Natural killer cell (primary cell): ENCODE measurements at regions of chr20 and their contacts with region 1.

Region 1: DNA sequence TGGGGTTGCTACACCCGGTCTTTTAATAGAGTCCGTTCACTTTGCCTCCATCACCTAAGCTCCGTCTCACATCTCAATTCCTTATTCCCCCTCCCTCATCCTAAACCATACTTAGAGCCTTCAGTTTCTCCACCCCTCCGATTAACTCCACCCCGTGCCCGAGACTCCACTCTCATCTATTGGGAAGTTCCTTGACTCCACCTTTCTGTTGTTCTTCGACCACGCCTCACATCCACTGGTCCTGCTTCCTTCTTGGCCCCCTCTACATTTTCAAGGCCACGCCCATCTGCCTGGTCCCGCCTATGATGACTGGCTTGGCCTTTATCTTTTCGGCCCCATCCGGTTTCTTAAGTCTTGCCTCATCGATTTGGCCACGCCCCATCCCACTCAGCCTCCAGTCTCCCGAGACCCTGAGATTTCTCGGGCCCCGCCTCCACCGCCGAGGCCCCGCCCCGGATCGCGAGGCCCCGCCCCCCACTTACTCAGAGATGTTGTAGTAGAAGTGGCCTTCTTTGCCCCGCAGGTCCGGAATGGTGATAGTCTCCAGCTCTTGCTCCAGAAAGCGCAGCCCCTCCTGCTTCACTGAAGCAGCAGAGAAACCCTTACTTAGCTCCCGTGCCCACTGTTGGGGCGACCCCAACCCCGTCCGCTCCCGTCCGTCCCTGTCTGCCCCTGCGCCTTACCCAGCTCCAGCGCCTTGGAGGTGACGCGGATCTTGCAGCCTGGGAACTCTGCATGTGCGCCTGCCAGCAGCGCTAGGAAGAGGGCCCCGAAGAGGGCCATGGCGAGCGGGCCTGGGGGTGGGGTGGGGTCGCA is 1.1 kb downstream of the PLTP start:
- DNase-seq: peak; percentile 89 to 96
- ATAC-seq: peak; percentile 93 to 97 (median 94)
- H3K4me3 ChIP-seq: peak overlapping the region; percentile 41
- H3K4me3 Mint-ChIP-seq: peak overlapping the region; percentile 75
- H3K27ac ChIP-seq: peak overlapping the region; percentile 26
- H3K27ac Mint-ChIP-seq: peak overlapping the region; percentile 73 to 88
- H3K4me1 ChIP-seq: peaks cover 23% of the 10 kb centered on the region
- H3K4me1 Mint-ChIP-seq: peaks cover 9 to 16% of the 10 kb centered on the region in 2 donors
- H3K27me3 ChIP-seq: peaks cover 10% of the 10 kb centered on the region
- H3K27me3 Mint-ChIP-seq: peaks cover 3% of the 10 kb centered on the region in 2 donors
- CTCF ChIP-seq: no peak

Region 2: GRCh38 chr20:45801851-45802250 is 109.0 kb before region 1 on chr20:
- intact Hi-C with region 1: no loop called
- DNase-seq: no peak
- ATAC-seq: no peak
- H3K4me3 ChIP-seq: no peak overlapping the region
- H3K4me3 Mint-ChIP-seq: no peak overlapping the region
- H3K27ac ChIP-seq: no peak overlapping the region
- H3K27ac Mint-ChIP-seq: no peak overlapping the region
- H3K4me1 ChIP-seq: peaks cover 10% of the 10 kb centered on the region
- H3K4me1 Mint-ChIP-seq: peaks cover 11 to 15% of the 10 kb centered on the region in 2 donors
- H3K27me3 ChIP-seq: no peaks in the 10 kb centered on the region
- H3K27me3 Mint-ChIP-seq: no peaks in the 10 kb centered on the region
- CTCF ChIP-seq: no peak

Region 3: DNA sequence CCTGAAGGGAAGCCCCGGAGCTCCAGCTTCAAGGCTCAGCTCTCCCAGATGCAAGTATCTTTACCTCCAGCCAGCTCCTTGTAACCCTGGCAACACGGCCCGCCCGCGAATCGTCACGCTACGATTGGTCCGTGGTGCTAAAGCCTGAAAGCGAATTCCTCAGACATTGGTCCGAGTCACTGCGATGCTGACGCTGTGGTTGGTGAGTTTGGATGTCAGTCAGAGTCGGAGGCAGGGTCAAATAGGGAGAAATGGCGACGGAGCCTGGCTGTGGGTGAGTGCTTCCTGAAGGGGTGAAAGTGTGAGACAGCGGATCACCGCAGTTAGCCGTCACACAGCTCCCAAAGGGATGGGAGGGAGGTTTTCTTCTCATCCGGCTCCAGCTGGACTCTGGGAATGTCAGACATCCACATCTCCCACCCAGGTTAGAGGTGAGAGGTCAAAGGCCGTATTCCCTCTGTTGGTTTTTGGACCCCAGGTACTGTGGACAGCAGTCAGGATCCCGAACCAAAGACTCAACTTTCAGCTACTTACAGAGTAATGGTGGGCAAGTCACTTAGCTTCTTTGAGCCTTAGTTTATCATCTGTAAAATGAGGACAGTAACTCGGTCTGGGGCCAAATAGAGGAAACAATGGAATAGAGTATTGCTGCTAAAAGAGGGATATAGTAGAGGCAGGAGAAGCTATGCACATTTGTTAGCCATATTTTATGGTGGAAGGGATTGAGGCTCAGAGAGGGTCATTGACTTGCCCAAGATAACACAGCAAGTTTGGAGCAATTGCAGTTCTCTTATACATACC is 29.7 kb before region 1 on chr20 and contains the start of gene ZSWIM1:
- intact Hi-C with region 1: loop called (anchors 1 kb)
- DNase-seq: peak; percentile 93 to 100
- ATAC-seq: peak; percentile 98
- H3K4me3 ChIP-seq: peak within 1 kb of the TSS; percentile 45
- H3K4me3 Mint-ChIP-seq: peak within 1 kb of the TSS; percentile 73
- H3K27ac ChIP-seq: peak within 1 kb of the TSS; percentile 49
- H3K27ac Mint-ChIP-seq: peak within 1 kb of the TSS; percentile 84 to 89
- H3K4me1 ChIP-seq: peaks cover 12% of the 10 kb centered on the region
- H3K4me1 Mint-ChIP-seq: peaks cover 18% of the 10 kb centered on the region in 2 donors
- H3K27me3 ChIP-seq: no peaks in the 10 kb centered on the region
- H3K27me3 Mint-ChIP-seq: peaks cover 0 to 4% of the 10 kb centered on the region in 2 donors
- CTCF ChIP-seq: no peak
- total RNA-seq, gene ZSWIM1: 0.59 to 2.4 (median 0.89) TPM